Gastrocnemius medialis (tissue), 4 donors: ENCODE measurements at regions of chr1 and their contacts with region 1.

Region 1: GRCh38 chr1:32702599-32703478 is at the start of gene SYNC:
- DNase-seq: peak; percentile 86 to 94
- ATAC-seq: peak; percentile 53 to 67
- H3K4me3 ChIP-seq: peak within 1 kb of the TSS; percentile 74 to 90 (median 80)
- H3K27ac ChIP-seq: peak within 1 kb of the TSS; percentile 98 to 100 (median 99)
- H3K4me1 ChIP-seq: peaks cover 41 to 56% of the 10 kb centered on the region in 2 donors
- H3K27me3 ChIP-seq: no peaks in the 10 kb centered on the region
- CTCF ChIP-seq: no peak
- POLR2A ChIP-seq: peak; percentile 83 to 84
- total RNA-seq, gene SYNC: 68.3 to 252 (median 158) TPM

Region 2: GRCh38 chr1:32500387-32501209 is 202.2 kb before region 1 on chr1:
- in situ Hi-C with region 1: no loop called
- intact Hi-C with region 1: loop called (anchors 5 kb)
- DNase-seq: peak; percentile 59 to 76
- ATAC-seq: peak; percentile 55 to 69
- H3K4me3 ChIP-seq: peak overlapping the region; percentile 58 to 71 (median 63)
- H3K27ac ChIP-seq: peak overlapping the region; percentile 89 to 96 (median 92)
- H3K4me1 ChIP-seq: peaks cover 25 to 34% of the 10 kb centered on the region in 2 donors
- H3K27me3 ChIP-seq: no peaks in the 10 kb centered on the region
- CTCF ChIP-seq: peak in 4 of 5 experiments; percentile 36 to 60 (median 51)
- POLR2A ChIP-seq: peak; percentile 54 to 66

Region 3: GRCh38 chr1:32650752-32651460 is 51.9 kb before region 1 on chr1 and contains the start of gene RBBP4:
- in situ Hi-C with region 1: no loop called
- intact Hi-C with region 1: loop called (anchors 1 kb)
- DNase-seq: peak; percentile 98
- ATAC-seq: peak; percentile 89 to 93
- H3K4me3 ChIP-seq: peak within 1 kb of the TSS; percentile 77 to 90 (median 82)
- H3K27ac ChIP-seq: peak within 1 kb of the TSS; percentile 93 to 100 (median 100)
- H3K4me1 ChIP-seq: peaks cover 27 to 40% of the 10 kb centered on the region in 2 donors
- H3K27me3 ChIP-seq: no peaks in the 10 kb centered on the region
- CTCF ChIP-seq: peak in 1 of 5 experiments; percentile 16
- POLR2A ChIP-seq: peak; percentile 87 to 94
- total RNA-seq, gene RBBP4: 50.0 to 92.3 (median 53.0) TPM

Region 4: DNA sequence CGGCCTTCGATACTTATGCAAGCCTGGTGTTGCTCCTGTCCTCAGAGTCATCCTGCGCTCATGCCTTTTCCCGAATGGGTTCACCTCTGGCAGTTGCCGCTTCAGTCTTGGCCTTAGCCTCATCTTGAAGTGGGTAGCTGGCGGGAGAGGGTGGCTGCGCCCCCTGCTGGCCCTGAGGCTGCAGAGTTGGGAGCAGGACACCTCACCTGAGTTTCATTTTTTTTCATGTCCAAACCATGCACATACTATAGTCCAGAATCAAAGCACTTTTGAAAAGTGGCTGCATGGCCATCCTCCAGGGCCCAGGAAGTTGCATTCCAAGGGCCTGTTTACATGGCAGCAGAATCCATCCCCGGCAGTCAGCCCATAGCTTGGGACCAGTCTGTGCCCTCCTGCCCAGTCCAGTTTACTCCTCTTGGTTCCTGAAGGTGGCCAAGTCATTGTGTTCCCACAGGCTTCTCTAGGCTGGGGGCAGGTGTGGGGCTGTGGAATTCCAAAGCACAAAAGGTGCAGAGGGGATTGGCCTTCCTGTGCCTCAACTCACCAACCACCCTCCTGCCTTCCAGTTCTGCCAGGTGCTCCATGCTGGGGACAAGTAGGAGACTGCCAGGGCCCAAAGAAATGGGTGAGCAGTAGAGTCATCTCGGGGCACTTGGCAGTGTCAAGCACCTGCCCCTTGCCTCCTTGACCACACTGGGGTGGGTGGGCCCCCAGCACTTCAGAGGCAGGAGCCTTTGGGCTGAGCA is 70.4 kb after region 1 on chr1:
- in situ Hi-C with region 1: loop called in 1 of 4 experiments (anchors 5 kb)
- intact Hi-C with region 1: no loop called
- DNase-seq: peak; percentile 61 to 84
- ATAC-seq: peak; percentile 81 to 89
- H3K4me3 ChIP-seq: no peak overlapping the region
- H3K27ac ChIP-seq: peak overlapping the region in 1 of 4 donors; percentile 21
- H3K4me1 ChIP-seq: peaks cover 0 to 5% of the 10 kb centered on the region in 2 donors
- H3K27me3 ChIP-seq: no peaks in the 10 kb centered on the region
- CTCF ChIP-seq: peak; percentile 83 to 96 (median 91)
- POLR2A ChIP-seq: no peak

Region 5: DNA sequence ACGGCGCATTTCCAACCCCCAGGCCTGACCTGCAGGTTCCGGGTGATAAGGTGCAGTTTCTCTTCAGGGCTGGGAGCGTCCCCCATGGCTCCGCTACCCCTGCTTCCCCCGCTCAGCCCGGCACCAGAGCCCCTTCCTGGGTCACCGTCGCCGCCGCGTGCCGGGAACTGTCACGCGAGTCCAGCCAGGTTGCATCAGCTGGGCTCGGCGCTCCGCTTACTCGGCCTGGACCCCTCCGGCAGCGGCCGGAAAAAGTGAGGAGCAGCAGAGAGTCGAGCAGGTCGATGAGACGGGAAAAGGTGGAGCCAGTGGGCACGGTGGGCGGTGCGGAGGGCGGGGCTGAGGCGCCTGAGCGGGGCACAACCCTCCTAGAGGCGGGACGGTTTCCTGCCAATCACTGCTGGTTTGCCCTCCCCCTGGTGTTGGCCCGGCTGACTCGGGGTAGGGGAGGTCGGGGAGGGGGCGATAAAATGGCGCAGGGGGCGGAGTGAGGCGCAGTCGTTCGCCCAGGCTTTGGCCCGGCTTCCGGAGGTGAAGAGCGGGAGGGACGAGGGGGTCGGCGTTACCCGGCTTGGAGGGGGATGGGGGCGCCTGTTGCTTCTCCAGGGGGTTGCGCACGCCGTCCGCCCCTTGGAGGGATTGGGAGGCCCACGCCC is 114.4 kb after region 1 on chr1 and contains the starts of genes S100PBP and YARS1:
- in situ Hi-C with region 1: no loop called
- intact Hi-C with region 1: loop called (anchors 5 kb)
- DNase-seq: peak; percentile 99
- ATAC-seq: peak; percentile 90 to 92
- H3K4me3 ChIP-seq: peak within 1 kb of the TSS; percentile 91 to 98 (median 93)
- H3K27ac ChIP-seq: peak within 1 kb of the TSS; percentile 95 to 99 (median 96)
- H3K4me1 ChIP-seq: peaks cover 45 to 47% of the 10 kb centered on the region in 2 donors
- H3K27me3 ChIP-seq: no peaks in the 10 kb centered on the region
- CTCF ChIP-seq: peak in 3 of 5 experiments; percentile 28 to 52 (median 39)
- POLR2A ChIP-seq: peak; percentile 97
- total RNA-seq, gene S100PBP: 4.9 to 11.5 (median 9.9) TPM
- total RNA-seq, gene YARS1: 37.8 to 59.4 (median 55.9) TPM

Region 6: GRCh38 chr1:33080885-33081553 is 378.2 kb after region 1 on chr1 and contains the start of gene AZIN2:
- in situ Hi-C with region 1: no loop called
- intact Hi-C with region 1: loop called (anchors 10 kb)
- DNase-seq: peak; percentile 93 to 94
- ATAC-seq: peak; percentile 97 to 99
- H3K4me3 ChIP-seq: peak within 1 kb of the TSS; percentile 63 to 80 (median 68)
- H3K27ac ChIP-seq: peak within 1 kb of the TSS in 3 of 4 donors; percentile 36 to 66 (median 57)
- H3K4me1 ChIP-seq: peaks cover 13 to 18% of the 10 kb centered on the region in 2 donors
- H3K27me3 ChIP-seq: no peaks in the 10 kb centered on the region
- CTCF ChIP-seq: no peak
- POLR2A ChIP-seq: peak; percentile 57 to 88
- total RNA-seq, gene AZIN2: 0.52 to 3.1 (median 1.2) TPM